ENCODE measurements at regions of chr4 and their contacts with region 1.

Region 1: GRCh38 chr4:82428969-82429727 is 1.1 kb downstream of the HNRNPDL start:
- DNase-seq: peak; percentile 93 to 97
- ATAC-seq: peak; percentile 86 to 87 (median 86)
- H3K4me3 ChIP-seq: peak overlapping the region; percentile 81
- H3K27ac ChIP-seq: peak overlapping the region; percentile 99
- H3K4me1 ChIP-seq: peaks cover 28% of the 10 kb centered on the region
- H3K27me3 ChIP-seq: no peaks in the 10 kb centered on the region
- CTCF ChIP-seq: peak; percentile 96

Region 2: GRCh38 chr4:82284858-82285805 is 144.0 kb before region 1 on chr4:
- intact Hi-C with region 1: loop called (anchors 10 kb)
- DNase-seq: peak; percentile 98 to 100
- ATAC-seq: peak; percentile 99 to 100 (median 99)
- H3K4me3 ChIP-seq: peak overlapping the region; percentile 68
- H3K27ac ChIP-seq: peak overlapping the region; percentile 71
- H3K4me1 ChIP-seq: no peaks in the 10 kb centered on the region
- H3K27me3 ChIP-seq: no peaks in the 10 kb centered on the region
- CTCF ChIP-seq: peak; percentile 89

Measured in psoas muscle (tissue), 8 donors.